Right ventricle myocardium inferior (tissue), 1 donor: ENCODE measurements at regions of chr3 and their contacts with region 1.

Region 1: DNA sequence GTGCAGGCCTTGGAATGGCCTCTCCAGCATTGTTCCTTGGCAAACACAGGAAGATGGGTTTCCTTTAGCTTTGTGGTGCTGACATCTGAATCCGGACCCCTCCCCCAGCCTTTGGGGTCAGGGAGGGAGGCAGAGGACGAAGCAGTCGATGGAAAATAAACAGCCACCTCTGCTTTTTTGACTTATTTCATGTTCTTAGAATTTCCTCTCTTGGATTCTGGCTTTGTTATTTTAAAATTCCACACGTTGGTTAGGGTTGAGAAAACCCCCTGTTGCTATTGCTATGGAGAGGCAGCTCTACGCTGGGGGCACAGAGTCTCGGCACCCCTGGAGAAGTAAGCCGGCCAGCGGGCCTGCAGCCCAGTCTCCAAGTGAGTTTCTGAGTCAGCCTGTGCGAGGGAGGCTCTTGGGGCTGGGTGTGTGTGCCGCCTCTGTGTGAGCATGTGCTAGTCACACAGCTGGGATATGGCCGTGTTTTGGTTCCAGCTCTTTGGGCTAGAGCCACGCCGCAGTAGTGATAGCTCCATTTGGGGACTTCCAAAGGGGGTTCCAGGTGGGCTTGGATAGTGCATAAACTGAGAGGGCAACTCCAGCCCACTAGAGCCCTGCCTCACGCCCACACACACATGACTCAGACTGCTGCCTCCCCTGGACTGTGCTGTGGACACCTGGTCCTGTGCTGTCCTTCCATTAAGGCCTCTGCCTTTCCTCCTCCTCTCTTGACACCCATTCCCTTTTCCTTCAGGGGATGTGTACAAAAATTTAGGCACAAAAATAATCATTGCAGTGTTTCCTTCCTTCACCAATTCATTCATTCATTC is 58.8 kb downstream of the AMOTL2 start:
- DNase-seq: peak; percentile 89
- ATAC-seq: peak; percentile 76

Region 2: DNA sequence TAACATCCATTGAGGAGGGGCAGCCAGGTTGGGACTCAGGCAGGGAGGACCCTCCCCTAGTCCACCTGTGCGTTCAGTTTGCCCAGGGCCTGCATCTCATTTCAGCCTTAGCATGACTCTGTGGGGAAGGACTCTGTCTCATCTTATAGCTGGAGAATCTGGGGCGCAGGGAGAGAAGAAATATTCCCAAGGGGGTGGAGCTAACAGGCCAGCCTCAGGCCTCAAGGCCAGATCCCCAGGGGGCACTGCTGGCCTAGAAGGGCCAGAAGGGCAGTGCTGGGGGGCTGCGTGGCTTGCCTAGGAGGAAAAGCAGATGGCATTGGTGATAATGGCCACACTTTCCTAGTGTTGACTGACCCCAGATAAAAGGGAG is 47.9 kb after region 1 on chr3:
- intact Hi-C with region 1: loop called (anchors 2 kb)
- DNase-seq: no peak
- ATAC-seq: no peak